PC-9 (cell line): ENCODE measurements at regions of chr10 and their contacts with region 1.

Region 1: DNA sequence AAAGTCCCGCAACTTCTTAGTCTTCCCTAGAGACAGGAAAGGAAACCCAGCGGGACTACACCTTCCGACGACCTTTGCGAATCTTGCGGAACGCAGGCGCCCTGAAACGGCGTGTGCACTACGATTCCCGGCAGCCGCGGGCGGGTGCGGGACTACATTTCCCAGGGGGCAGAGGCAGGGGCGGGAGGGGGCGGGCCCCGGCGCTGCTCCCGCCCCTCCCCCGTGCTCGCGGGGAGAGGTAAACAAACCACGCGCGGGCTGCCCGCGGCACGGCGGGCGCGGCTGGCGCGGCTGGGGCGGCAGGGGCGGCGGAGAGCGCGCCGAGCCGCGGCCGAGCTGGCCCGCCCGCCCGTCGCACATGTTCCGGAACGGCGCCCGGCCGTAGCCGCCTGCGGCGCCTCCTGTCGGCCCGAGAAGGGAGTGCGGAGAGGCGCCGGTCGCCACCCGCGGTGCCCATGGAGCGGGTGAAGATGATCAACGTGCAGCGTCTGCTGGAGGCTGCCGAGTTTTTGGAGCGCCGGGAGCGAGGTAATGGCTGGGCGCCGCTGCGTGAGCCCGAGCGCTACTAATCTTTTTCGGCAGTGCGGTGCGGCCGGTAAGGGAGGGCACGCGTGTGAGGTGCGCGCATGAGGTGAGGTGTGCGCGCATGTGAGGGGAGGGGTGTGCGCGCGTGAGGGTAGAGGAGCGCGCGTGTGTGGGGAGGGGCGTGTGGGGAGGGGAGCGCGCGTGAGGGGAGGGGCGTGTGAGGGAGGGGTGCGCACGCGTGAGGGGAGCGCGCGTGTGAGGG is 18.5 kb downstream of the MXI1 start:
- DNase-seq: peak; percentile 76 to 80
- H3K4me3 ChIP-seq: peak overlapping the region; percentile 66
- H3K27ac ChIP-seq: peak overlapping the region; percentile 59
- H3K4me1 ChIP-seq: peaks cover 15% of the 10 kb centered on the region
- H3K27me3 ChIP-seq: no peaks in the 10 kb centered on the region
- CTCF ChIP-seq: peak; percentile 61

Region 2: DNA sequence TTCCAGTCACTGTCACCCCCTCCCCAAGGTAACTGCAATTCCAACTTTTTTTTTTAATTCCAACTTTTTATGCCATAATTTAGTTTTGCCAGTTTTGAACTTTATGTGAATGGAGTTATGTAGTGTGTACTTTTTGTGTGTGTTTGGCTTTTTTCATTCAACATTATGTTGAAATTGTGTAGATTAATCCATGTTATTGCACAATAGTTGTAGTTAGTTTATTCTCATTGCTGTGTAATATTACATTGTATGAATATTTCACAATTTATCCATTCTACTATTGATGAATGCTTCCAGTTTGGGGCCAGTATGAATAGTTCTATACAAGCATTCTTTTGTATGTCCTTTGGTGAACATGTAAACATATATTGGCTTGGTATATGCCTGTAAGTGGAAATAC is 13.9 kb after region 1 on chr10:
- CTCF ChIA-PET with region 1: no interaction called
- POLR2A ChIA-PET with region 1: interaction called, 14 read pairs
- intact Hi-C with region 1: no loop called
- DNase-seq: no peak
- H3K4me3 ChIP-seq: no peak overlapping the region
- H3K27ac ChIP-seq: no peak overlapping the region
- H3K4me1 ChIP-seq: no peaks in the 10 kb centered on the region
- H3K27me3 ChIP-seq: no peaks in the 10 kb centered on the region
- CTCF ChIP-seq: no peak

Region 3: DNA sequence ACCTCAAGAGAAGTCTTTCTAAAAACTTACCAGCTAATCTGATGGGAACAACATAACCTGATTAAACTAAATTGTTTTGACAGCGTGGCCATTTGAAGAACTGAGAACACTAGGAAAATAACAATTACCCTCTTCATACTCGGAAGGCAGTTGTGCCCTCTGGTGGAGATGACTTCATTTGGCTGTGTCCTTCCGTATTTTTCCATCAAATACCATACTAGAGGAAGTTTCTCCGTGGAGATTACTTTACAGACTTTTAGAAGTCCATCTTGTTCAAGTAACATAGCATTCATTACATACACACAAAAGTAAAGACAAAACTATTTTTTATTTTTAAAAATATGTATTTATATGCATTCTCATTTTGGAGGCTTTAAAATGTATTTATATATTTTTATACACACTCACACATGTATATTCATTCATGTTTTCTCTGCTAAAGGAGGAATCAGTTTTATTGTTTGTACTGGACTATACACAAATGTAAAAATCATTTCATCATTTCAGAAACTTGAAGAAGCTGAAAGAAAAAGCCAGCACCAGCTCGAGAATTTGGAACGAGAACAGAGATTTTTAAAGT is 53.5 kb after region 1 on chr10:
- CTCF ChIA-PET with region 1: no interaction called
- POLR2A ChIA-PET with region 1: no interaction called
- intact Hi-C with region 1: loop called (anchors 5 kb)
- DNase-seq: peak; percentile 20 to 39
- H3K4me3 ChIP-seq: no peak overlapping the region
- H3K27ac ChIP-seq: no peak overlapping the region
- H3K4me1 ChIP-seq: no peaks in the 10 kb centered on the region
- H3K27me3 ChIP-seq: no peaks in the 10 kb centered on the region
- CTCF ChIP-seq: peak; percentile 68

Region 4: DNA sequence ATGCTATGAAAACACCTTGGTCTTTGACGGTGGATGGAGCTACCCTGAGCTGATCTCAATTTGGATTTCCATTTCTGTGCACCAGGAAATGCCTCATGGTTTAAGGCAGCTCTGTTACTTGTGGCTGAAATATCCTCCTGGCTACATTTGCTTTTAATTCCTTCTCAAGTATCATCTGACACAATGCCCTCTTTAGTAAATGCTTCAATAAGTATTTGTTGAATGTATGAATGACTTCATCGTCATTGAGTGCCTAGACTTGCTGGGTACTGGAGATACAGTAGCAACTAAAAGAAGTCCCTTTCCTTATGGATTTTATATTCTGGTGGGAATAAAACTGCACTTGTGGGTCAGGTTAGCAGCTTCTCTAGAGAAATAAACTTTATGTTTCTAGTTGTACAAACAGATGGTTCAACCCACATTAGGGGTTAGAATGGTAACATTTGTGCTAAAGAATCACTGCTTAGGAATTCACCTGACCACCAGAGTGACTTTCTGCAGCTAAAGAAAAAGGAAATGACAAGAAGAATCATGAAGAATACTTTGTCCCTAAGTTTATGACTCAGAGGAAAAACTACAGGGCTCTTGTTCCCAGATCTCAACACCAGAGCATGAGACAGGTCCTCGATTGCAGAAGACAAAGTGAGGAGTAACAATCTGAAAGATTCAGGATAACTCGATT is 100.5 kb after region 1 on chr10:
- CTCF ChIA-PET with region 1: no interaction called
- POLR2A ChIA-PET with region 1: no interaction called
- intact Hi-C with region 1: no loop called
- DNase-seq: peak in 1 of 2 experiments; percentile 89
- H3K4me3 ChIP-seq: peak overlapping the region; percentile 20; the same call in 1 of the 2 replicates
- H3K27ac ChIP-seq: peak overlapping the region; percentile 99
- H3K4me1 ChIP-seq: peaks cover 62% of the 10 kb centered on the region
- H3K27me3 ChIP-seq: no peaks in the 10 kb centered on the region
- CTCF ChIP-seq: no peak

Region 5: DNA sequence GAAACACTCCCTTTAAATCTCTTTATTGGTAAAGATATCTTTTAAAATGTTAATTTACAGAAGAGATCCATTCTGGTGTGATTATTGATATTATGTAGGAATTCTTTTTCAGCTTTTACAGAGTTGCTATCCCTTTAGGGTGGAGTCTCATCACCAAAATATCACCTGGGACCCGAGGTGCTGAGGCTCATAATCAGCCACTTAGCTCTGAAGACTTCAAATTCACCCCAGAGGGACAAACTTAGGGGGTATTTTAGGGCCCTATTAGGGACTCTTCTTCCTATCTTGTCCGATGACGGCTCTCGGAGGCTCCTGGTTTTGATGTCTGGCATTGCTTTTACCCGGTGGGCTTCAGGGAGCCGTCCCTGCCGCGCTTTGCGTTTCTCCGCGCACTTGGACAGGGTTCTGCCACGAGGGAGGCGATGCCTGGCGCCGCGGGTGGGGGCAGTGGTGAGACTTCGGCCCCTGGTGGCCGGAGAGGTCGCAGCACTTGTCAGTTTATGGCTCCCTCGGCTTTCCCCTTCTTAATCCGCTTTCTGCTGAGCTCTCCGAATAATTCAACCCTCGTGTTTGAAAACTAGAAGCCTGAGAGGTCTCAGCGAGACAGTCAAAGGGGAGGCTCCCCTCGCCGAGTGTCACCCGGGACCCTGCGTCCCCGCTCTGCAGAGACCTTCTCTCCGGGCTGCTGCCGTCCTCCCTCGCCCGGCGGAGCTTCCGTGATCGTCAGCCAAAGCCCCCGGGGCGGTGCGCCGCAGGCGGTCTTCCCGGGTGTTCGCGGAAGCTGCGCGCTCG is 446.0 kb after region 1 on chr10:
- CTCF ChIA-PET with region 1: no interaction called
- POLR2A ChIA-PET with region 1: no interaction called
- intact Hi-C with region 1: no loop called
- DNase-seq: peak; percentile 55 to 64
- H3K4me3 ChIP-seq: peak overlapping the region; percentile 75
- H3K27ac ChIP-seq: no peak overlapping the region
- H3K4me1 ChIP-seq: no peaks in the 10 kb centered on the region; the same call in 1 of the 2 replicates
- H3K27me3 ChIP-seq: no peaks in the 10 kb centered on the region
- CTCF ChIP-seq: peak; percentile 74

Region 6: DNA sequence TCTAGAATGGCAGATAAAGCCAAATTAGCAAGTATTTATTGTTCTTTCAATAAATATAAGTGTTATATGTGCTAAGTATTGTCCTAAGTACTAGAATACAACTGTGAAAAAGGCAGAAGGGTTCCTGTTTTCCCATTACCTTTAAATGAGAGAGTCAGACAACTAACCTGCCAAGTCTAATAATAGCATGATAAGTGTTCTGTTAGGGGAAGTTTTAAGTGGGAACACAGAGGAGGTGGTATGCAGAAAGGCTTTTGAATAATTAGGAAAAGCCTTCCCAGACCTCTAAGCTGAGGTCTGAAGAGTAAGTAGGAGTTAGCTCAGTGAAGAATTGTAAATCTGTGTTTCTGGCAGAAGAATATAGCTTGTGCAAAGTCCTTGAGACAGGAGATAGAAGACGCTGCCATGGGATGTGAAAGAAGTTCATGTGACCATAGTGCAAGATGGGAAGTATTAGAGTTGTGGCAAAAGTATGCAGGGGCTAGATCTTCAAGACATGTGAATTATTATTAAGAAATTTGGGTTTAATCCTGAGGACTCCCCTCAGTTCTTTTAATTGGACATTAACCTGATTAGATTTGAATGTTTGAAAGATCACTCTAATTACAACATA is 705.9 kb after region 1 on chr10:
- CTCF ChIA-PET with region 1: no interaction called
- POLR2A ChIA-PET with region 1: interaction called, 50 read pairs
- intact Hi-C with region 1: no loop called
- DNase-seq: no peak
- H3K4me3 ChIP-seq: no peak overlapping the region
- H3K27ac ChIP-seq: peak overlapping the region; percentile 61
- H3K4me1 ChIP-seq: peaks cover 37% of the 10 kb centered on the region
- H3K27me3 ChIP-seq: no peaks in the 10 kb centered on the region
- CTCF ChIP-seq: no peak